Activated CD4-positive, alpha-beta T cell treated with anti-CD3 and anti-CD28 coated beads for 36 hours (primary cell): ENCODE measurements at regions of chr16 and their contacts with region 1.

Region 1: GRCh38 chr16:31032736-31033708 is at the start of gene STX4:
- DNase-seq: peak; percentile 99
- ATAC-seq: peak; percentile 89
- H3K4me3 Mint-ChIP-seq: peak within 1 kb of the TSS; percentile 96
- H3K27ac Mint-ChIP-seq: peak within 1 kb of the TSS; percentile 93
- H3K4me1 Mint-ChIP-seq: peaks cover 15% of the 10 kb centered on the region
- H3K27me3 Mint-ChIP-seq: no peaks in the 10 kb centered on the region
- total RNA-seq, gene STX4: 29.2 to 35.9 TPM

Region 2: DNA sequence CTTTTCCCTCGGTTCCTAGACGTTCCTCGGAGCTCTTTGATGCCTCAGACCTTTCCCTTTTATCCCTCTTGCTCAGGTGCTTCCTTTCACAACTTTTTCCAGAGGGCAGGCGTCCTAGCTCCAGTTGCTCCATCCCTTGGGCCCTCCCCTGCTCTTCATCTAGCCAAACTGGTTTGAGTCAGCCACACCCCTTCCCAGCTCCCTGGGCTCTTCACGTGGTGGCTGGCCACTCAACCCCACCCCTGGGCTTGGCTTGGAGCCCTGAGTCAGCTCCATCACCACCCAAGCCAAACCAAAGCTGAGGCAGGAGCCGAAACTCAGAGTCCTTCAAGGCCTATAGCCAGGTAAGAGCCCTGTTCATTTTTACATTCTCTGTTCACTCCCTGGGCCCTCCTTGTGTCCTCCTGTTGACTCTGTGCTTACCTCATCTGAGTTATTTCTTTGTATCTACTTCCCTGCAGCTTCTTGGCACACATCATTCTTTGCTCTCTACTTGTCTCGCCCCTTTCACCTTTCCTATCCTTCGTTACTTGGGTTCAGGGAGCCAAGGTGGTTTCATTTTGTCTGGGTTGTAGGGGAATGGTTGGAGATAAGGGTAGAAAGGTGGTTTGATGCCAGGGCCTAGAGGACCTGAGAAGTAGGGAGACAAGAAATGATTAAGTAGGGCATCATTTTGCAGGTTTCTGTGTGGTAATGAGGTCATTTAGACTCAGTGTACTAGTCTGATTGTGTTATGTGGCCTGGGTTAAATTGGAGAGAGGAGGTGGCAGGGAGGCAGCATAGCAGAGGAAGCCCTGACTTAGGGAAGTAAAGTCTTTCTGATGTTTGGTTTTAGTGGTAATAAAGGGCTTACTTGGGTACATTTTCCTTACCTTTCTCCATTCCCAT is 292.4 kb before region 1 on chr16:
- CTCF ChIA-PET with region 1: no interaction called
- POLR2A ChIA-PET with region 1: no interaction called
- intact Hi-C with region 1: no loop called
- DNase-seq: peak; percentile 28
- ATAC-seq: peak; percentile 74
- H3K4me3 Mint-ChIP-seq: no peak overlapping the region
- H3K27ac Mint-ChIP-seq: peak overlapping the region; percentile 73
- H3K4me1 Mint-ChIP-seq: peaks cover 15% of the 10 kb centered on the region
- H3K27me3 Mint-ChIP-seq: no peaks in the 10 kb centered on the region

Region 3: GRCh38 chr16:30761928-30762810 is 270.9 kb before region 1 on chr16 and contains the starts of genes CFAP119 and RNF40:
- CTCF ChIA-PET with region 1: no interaction called
- POLR2A ChIA-PET with region 1: no interaction called
- intact Hi-C with region 1: loop called in 1 of 2 experiments (anchors 1 kb)
- DNase-seq: peak; percentile 94
- ATAC-seq: peak; percentile 98
- H3K4me3 Mint-ChIP-seq: peak within 1 kb of the TSS; percentile 90
- H3K27ac Mint-ChIP-seq: peak within 1 kb of the TSS; percentile 83
- H3K4me1 Mint-ChIP-seq: peaks cover 25% of the 10 kb centered on the region
- H3K27me3 Mint-ChIP-seq: no peaks in the 10 kb centered on the region
- total RNA-seq, gene CFAP119: 1.7 to 3.1 TPM
- total RNA-seq, gene RNF40: 72.3 to 85.5 TPM

Region 4: GRCh38 chr16:30893744-30894539 is 139.1 kb before region 1 on chr16 and contains the start of gene BCL7C:
- CTCF ChIA-PET with region 1: no interaction called
- POLR2A ChIA-PET with region 1: no interaction called
- intact Hi-C with region 1: loop called in 1 of 2 experiments (anchors 1 kb)
- DNase-seq: peak; percentile 92
- ATAC-seq: peak; percentile 74
- H3K4me3 Mint-ChIP-seq: peak within 1 kb of the TSS; percentile 84
- H3K27ac Mint-ChIP-seq: peak within 1 kb of the TSS; percentile 88
- H3K4me1 Mint-ChIP-seq: peaks cover 35% of the 10 kb centered on the region
- H3K27me3 Mint-ChIP-seq: no peaks in the 10 kb centered on the region
- total RNA-seq, gene BCL7C: 19.5 to 20.4 TPM

Region 5: GRCh38 chr16:30997000-30997886 is 35.8 kb before region 1 on chr16:
- CTCF ChIA-PET with region 1: interaction called, 3 read pairs
- POLR2A ChIA-PET with region 1: no interaction called
- intact Hi-C with region 1: loop called in 1 of 2 experiments (anchors 1 kb)
- DNase-seq: peak; percentile 94
- ATAC-seq: peak; percentile 95
- H3K4me3 Mint-ChIP-seq: peak overlapping the region; percentile 72
- H3K27ac Mint-ChIP-seq: no peak overlapping the region
- H3K4me1 Mint-ChIP-seq: peaks cover 16% of the 10 kb centered on the region
- H3K27me3 Mint-ChIP-seq: peaks cover 3% of the 10 kb centered on the region

Region 6: DNA sequence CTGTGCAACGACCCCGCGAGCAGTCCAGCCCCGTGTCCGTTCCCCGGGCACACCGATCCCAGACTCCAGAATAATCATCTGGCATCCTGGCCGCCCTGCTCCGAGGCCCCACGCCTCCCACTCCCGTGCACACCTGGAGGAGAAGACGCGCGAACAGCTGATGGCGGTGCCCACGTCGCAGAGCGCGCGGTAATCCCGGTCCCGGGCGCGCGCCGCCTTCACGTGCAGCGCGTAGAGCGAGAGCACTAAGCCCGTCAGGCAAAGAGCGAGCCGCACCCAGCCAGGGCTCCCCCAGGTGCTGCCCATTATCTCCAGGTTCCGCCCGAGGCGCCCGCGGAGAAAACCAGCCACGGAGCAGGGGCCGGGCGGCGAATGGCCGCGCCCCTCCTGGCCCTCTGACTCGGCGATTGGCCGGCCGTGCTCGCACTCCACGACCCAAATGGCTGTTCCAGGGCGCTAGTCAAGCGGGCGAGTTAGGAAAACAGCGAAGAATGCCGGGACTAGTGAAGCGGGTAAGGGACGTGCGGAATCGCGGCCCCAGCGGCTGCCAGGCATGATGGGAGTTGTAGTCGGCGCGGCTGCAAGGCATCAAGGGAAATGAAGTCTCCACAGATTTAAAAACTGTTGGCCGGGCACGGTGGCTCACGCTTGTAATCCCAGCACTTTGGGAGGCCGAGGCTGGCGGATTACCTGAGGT is 61.5 kb after region 1 on chr16 and contains the start of gene VKORC1:
- CTCF ChIA-PET with region 1: no interaction called
- POLR2A ChIA-PET with region 1: no interaction called
- intact Hi-C with region 1: loop called (anchors 1 kb)
- DNase-seq: peak; percentile 96
- ATAC-seq: peak; percentile 92
- H3K4me3 Mint-ChIP-seq: peak within 1 kb of the TSS; percentile 98
- H3K27ac Mint-ChIP-seq: peak within 1 kb of the TSS; percentile 89
- H3K4me1 Mint-ChIP-seq: peaks cover 25% of the 10 kb centered on the region
- H3K27me3 Mint-ChIP-seq: no peaks in the 10 kb centered on the region
- total RNA-seq, gene VKORC1: 59.6 to 64.2 TPM

Region 7: GRCh38 chr16:31117391-31118197 is 84.6 kb after region 1 on chr16 and contains the start of gene KAT8:
- CTCF ChIA-PET with region 1: interaction called, 4 read pairs
- POLR2A ChIA-PET with region 1: no interaction called
- intact Hi-C with region 1: loop called in 1 of 2 experiments (anchors 1 kb)
- DNase-seq: peak; percentile 99
- ATAC-seq: peak; percentile 93
- H3K4me3 Mint-ChIP-seq: peak within 1 kb of the TSS; percentile 88
- H3K27ac Mint-ChIP-seq: peak within 1 kb of the TSS; percentile 83
- H3K4me1 Mint-ChIP-seq: peaks cover 14% of the 10 kb centered on the region
- H3K27me3 Mint-ChIP-seq: no peaks in the 10 kb centered on the region
- total RNA-seq, gene KAT8: 53.6 to 63.1 TPM

Region 8: GRCh38 chr16:31472709-31473203 is 439.7 kb after region 1 on chr16:
- CTCF ChIA-PET with region 1: no interaction called
- POLR2A ChIA-PET with region 1: no interaction called
- intact Hi-C with region 1: loop called in 1 of 2 experiments (anchors 1 kb)
- DNase-seq: peak; percentile 74
- ATAC-seq: peak; percentile 54
- H3K4me3 Mint-ChIP-seq: peak overlapping the region; percentile 54
- H3K27ac Mint-ChIP-seq: no peak overlapping the region
- H3K4me1 Mint-ChIP-seq: peaks cover 22% of the 10 kb centered on the region
- H3K27me3 Mint-ChIP-seq: peaks cover 18% of the 10 kb centered on the region